GM18951 (cell line): ENCODE measurements at regions of chr17 and their contacts with region 1.

Region 1: GRCh38 chr17:80430446-80431245 is 15.7 kb downstream of the ENDOV start:
- POLR2A ChIP-seq: no peak

Region 2: DNA sequence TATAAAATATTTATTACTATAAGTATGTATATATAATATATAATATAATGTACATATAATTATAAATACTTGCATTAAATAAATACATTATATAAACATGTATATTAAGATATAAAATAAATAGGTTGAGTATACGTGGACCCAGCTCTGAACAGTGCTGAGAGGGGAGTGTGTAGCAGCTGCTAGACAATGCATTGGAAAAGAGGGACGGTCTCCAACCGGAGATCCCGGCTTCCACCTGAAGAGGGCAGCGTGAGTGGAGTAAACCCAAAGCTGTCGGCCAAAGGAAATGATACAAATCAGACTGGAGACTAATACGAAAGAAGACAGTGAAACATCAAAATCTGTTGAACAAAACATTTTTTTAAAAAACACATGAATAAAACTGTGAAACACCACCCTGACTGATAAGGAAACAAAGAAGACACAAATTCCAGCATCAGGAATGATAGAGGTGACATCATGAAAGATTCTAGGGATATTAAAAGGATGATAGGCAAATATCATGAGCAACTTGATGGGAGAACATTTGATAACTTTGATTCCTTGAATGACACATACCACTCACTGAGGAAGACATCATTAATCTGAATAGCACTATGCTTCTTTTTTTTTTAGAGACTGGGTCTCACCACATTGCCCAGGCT is 435.6 kb after region 1 on chr17:
- in situ Hi-C with region 1: loop called (anchors 10 kb)
- POLR2A ChIP-seq: no peak

Region 3: DNA sequence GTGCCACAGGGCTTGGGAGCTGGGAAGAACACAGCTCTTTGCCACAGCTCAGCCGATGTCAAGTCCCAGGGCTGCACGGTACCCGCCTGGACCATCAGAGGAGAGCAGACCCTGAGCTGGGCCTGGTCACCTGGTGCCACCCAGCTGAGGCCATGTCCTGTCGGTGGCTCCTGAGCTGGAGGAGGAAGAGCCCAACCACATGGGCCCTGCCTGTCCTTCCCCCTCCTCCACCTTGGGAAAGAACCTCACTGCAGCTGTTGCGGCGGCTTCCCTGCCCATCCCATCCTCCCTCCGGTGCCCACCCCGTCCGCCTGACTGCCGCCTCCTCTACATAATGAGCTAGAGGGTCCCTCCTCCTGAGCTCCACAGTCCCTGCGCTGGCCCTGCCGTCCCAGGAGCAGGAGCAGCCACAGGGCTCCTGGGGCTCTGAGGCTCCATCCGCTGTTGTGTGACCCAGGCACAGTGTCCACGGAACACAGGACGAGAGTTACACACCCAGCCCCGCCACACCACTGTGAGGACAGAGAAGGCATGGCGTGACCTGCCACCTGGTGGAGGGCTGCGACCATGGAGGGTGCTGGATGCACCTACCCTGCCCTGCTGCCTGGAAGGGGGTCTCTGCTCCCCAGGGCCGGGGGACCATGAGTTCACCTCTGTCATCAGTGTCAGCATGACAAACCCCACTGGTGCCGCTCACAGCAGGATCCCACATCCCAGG is 539.6 kb after region 1 on chr17:
- in situ Hi-C with region 1: loop called (anchors 5 kb)
- POLR2A ChIP-seq: no peak

Region 4: DNA sequence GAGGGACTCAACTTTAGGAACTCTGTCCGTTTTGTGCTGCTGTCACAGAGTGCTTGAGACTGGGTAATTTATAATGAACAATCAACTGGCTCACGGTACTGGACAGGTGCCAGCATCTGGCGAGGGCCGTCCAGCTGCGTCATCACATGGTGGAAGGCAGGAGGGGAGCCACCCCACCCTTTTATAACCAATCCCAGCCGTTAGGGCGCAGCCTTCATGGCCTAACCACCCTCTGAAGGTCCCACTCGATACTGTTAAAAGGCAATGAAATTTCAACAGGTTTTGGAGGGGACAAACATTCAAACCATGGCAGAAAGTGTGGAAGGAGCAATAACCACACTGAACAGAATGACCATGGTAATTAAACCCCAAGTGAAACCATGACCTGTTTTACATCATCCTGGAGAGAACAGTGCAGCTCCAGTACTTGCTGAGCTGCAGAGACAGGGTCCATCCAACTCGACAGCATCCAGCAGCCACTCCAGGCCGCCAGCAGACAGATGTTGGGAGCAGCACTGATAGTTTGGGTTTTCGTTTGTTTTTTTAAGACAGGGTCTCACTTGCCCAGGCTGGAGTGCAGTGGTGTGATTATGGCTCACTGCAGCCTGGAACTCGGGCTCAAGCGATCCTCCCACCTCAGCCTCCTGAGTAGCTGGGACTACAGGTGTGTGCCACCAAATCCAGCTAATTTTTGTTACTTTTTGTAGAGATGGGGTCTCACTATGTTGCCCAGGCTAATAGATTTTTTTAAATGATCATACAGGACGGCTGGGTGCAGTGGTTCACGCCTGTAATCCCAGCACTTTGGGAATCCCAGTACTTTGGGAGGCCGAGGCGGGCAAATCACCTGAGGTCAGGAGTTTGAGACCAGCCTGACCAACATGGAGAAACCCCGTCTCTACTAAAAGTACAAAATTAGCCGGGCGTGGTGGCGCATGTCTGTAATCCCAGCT is 572.0 kb after region 1 on chr17:
- in situ Hi-C with region 1: no loop called
- POLR2A ChIP-seq: no peak